Posterior cingulate gyrus (tissue), 11 donors: ENCODE measurements at regions of chr3 and their contacts with region 1.

Region 1: GRCh38 chr3:170908235-170909116 is at the start of gene EIF5A2:
- DNase-seq: peak; percentile 83 to 99 (median 92)

Region 2: GRCh38 chr3:170869645-170870593 is 38.6 kb before region 1 on chr3 and contains the start of gene RPL22L1:
- intact Hi-C with region 1: loop called (anchors 5 kb)
- DNase-seq: peak; percentile 91 to 99 (median 94)

Region 3: GRCh38 chr3:171230865-171231264 is 322.4 kb after region 1 on chr3:
- intact Hi-C with region 1: no loop called
- DNase-seq: peak in 1 of 10 donors; percentile 79